ENCODE measurements at regions of chr7 and their contacts with region 1.

Region 1: DNA sequence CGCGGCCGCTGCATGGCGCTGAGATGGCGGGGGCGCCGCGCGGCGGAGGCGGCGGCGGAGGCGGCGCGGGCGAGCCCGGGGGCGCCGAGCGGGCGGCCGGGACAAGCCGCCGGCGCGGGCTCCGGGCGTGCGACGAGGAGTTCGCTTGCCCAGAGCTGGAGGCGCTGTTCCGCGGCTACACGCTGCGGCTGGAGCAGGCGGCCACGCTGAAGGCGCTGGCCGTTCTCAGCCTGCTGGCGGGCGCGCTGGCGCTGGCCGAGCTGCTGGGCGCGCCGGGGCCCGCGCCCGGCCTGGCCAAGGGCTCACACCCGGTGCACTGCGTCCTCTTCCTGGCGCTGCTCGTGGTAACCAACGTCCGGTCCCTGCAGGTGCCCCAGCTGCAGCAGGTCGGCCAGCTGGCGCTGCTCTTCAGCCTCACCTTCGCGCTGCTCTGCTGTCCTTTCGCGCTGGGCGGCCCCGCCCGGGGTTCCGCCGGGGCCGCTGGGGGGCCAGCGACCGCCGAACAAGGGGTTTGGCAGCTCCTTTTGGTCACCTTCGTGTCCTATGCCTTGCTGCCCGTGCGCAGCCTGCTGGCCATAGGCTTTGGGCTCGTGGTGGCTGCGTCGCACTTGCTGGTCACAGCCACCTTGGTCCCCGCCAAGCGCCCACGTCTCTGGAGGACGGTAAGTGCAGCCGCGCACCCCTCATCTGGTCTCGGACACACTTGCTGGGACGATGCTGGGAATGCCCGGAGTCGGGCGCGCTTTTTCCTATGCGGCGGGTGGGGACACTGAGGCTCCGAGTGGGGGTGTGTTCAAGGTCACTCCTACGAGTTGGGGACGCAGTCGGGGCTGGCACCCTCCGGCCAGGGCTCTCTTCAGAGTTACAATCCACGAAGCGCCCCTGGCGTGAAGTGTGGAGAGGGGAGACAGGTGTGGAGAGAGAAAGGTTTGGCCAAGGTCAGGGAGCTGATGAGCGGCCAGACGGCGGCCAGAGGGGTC is 643 bp downstream of the ADCY1 start:
- DNase-seq: peak; percentile 35
- ATAC-seq: peak; percentile 94
- H3K4me3 ChIP-seq: peak overlapping the region; percentile 42 to 79 (median 53); a peak in 5 of 6 replicates
- H3K27ac ChIP-seq: no peak overlapping the region
- H3K4me1 ChIP-seq: peaks cover 20% of the 10 kb centered on the region
- H3K27me3 ChIP-seq: peaks cover 10 to 67% of the 10 kb centered on the region in 2 experiments
- CTCF ChIP-seq: peak; percentile 46
- EP300 ChIP-seq: no peak
- POLR2A ChIP-seq: no peak
- RAD21 ChIP-seq: peak; percentile 47

Region 2: GRCh38 chr7:45160417-45160881 is 414.4 kb before region 1 on chr7:
- CTCF ChIA-PET with region 1: no interaction called
- POLR2A ChIA-PET with region 1: no interaction called
- in situ Hi-C with region 1: loop called (anchors 25 kb)
- intact Hi-C with region 1: loop called (anchors 10 kb)
- DNase-seq: no peak
- ATAC-seq: no peak
- H3K4me3 ChIP-seq: no peak overlapping the region
- H3K27ac ChIP-seq: no peak overlapping the region
- H3K4me1 ChIP-seq: no peaks in the 10 kb centered on the region
- H3K27me3 ChIP-seq: peaks cover 7 to 57% of the 10 kb centered on the region in 2 experiments; a peak in 4 of 5 replicates
- CTCF ChIP-seq: no peak
- EP300 ChIP-seq: no peak
- POLR2A ChIP-seq: no peak
- RAD21 ChIP-seq: no peak

Region 3: DNA sequence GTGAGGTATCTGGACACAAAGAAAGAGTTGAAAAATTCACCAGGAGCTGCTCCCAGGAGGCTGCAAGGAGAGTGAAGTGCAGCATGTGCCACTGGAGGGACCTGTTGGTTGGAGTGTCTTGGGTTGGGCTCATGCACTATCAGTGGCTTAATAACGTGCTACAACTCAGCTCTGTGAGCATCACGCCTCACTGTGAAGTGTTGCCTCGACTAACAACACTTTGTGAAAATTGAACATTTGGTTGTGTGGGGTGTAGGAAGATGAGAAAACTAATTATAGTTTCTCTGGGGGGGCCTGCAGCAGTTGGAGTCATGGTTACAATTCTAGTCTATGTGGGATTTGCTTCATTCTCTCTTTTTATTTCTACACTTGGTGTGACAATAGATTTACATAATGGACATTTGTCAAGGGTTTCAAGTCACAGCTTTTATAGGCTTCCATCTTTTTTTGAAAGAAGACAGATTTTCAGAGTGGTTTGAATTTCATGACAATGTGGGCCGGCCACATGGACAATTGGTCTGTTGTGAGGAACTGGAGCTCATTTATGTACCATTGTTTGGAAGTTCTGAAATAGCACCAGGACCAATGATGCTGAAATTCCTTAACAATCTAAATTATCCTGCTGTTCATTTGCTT is 295.9 kb before region 1 on chr7:
- CTCF ChIA-PET with region 1: no interaction called
- POLR2A ChIA-PET with region 1: no interaction called
- in situ Hi-C with region 1: no loop called
- intact Hi-C with region 1: no loop called
- DNase-seq: no peak
- ATAC-seq: no peak
- H3K4me3 ChIP-seq: no peak overlapping the region
- H3K27ac ChIP-seq: no peak overlapping the region
- H3K4me1 ChIP-seq: no peaks in the 10 kb centered on the region
- H3K27me3 ChIP-seq: no peaks in the 10 kb centered on the region; a peak in 1 of 5 replicates
- CTCF ChIP-seq: no peak
- EP300 ChIP-seq: no peak
- POLR2A ChIP-seq: no peak
- RAD21 ChIP-seq: no peak

Region 4: DNA sequence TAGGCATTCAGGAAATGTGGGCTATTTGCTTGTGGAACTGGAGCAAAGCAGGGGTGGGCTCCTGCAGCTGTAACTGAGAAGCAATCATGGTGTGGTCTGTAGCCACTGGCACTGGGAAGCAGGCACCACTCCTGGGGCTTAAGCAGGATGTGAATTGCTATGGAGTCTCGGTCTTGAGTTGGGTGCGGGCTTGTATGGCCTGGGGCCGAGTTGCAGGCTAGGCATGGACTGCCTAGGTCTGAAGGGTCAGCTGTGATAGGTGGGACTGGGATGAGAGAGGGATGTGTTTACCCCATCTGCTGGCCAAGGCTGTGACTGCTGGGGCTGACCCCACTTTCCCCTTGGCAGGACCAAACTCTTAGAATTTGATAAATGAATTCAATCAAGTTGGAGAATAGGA is 42.4 kb after region 1 on chr7:
- CTCF ChIA-PET with region 1: no interaction called
- POLR2A ChIA-PET with region 1: no interaction called
- in situ Hi-C with region 1: no loop called
- intact Hi-C with region 1: loop called (anchors 1 kb)
- DNase-seq: no peak
- ATAC-seq: peak; percentile 44; the same call in 1 of the 3 replicates
- H3K4me3 ChIP-seq: no peak overlapping the region
- H3K27ac ChIP-seq: no peak overlapping the region
- H3K4me1 ChIP-seq: no peaks in the 10 kb centered on the region
- H3K27me3 ChIP-seq: no peaks in the 10 kb centered on the region
- CTCF ChIP-seq: no peak
- EP300 ChIP-seq: no peak
- POLR2A ChIP-seq: no peak
- RAD21 ChIP-seq: no peak